CD4-positive, alpha-beta T cell (primary cell): ENCODE measurements at regions of chr12 and their contacts with region 1.

Region 1: GRCh38 chr12:96194971-96195844 is 1.0 kb downstream of the ELK3 start:
- DNase-seq: peak; percentile 47 to 95 (median 69)
- ATAC-seq: peak; percentile 72
- H3K4me3 ChIP-seq: peak overlapping the region; percentile 96
- H3K4me3 Mint-ChIP-seq: peak overlapping the region; percentile 96
- H3K27ac ChIP-seq: peak overlapping the region; percentile 85 to 98
- H3K27ac Mint-ChIP-seq: peak overlapping the region; percentile 97
- H3K4me1 ChIP-seq: peaks cover 33% of the 10 kb centered on the region
- H3K4me1 Mint-ChIP-seq: peaks cover 62% of the 10 kb centered on the region
- H3K27me3 ChIP-seq: no peaks in the 10 kb centered on the region
- H3K27me3 Mint-ChIP-seq: no peaks in the 10 kb centered on the region
- CTCF ChIP-seq: no peak

Region 2: DNA sequence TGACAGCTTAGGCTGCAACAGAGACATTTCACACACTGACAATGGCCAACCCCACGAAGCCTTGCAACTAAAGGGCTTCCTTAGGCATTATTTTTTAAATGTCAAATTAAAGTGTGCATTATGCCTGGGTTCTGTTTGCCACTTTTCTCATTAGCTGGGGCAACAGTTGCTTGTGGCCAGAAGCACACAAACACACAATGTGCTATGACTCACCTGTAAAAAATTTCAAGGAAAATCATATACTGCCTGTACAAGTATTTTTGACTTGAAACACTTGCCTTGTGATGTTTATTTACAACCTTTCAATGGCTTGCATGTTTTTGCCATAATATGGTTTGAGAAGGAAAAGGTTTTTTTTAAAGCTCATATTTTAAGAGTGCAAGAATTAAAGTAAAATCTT is 406.6 kb before region 1 on chr12:
- CTCF ChIA-PET with region 1: no interaction called
- POLR2A ChIA-PET with region 1: no interaction called
- intact Hi-C with region 1: no loop called
- DNase-seq: no peak
- ATAC-seq: no peak
- H3K4me3 ChIP-seq: no peak overlapping the region
- H3K4me3 Mint-ChIP-seq: peak overlapping the region; percentile 77
- H3K27ac ChIP-seq: no peak overlapping the region
- H3K27ac Mint-ChIP-seq: no peak overlapping the region
- H3K4me1 ChIP-seq: peaks cover 21% of the 10 kb centered on the region
- H3K4me1 Mint-ChIP-seq: peaks cover 8% of the 10 kb centered on the region
- H3K27me3 ChIP-seq: peaks cover 30 to 60% of the 10 kb centered on the region in 2 experiments
- H3K27me3 Mint-ChIP-seq: peaks cover 80% of the 10 kb centered on the region
- CTCF ChIP-seq: no peak

Region 3: GRCh38 chr12:96140174-96140573 is 55.0 kb before region 1 on chr12:
- CTCF ChIA-PET with region 1: no interaction called
- POLR2A ChIA-PET with region 1: no interaction called
- intact Hi-C with region 1: loop called in 1 of 2 experiments (anchors 5 kb)
- DNase-seq: no peak
- ATAC-seq: no peak
- H3K4me3 ChIP-seq: no peak overlapping the region
- H3K4me3 Mint-ChIP-seq: no peak overlapping the region
- H3K27ac ChIP-seq: no peak overlapping the region
- H3K27ac Mint-ChIP-seq: no peak overlapping the region
- H3K4me1 ChIP-seq: peaks cover 24% of the 10 kb centered on the region
- H3K4me1 Mint-ChIP-seq: peaks cover 29% of the 10 kb centered on the region
- H3K27me3 ChIP-seq: no peaks in the 10 kb centered on the region
- H3K27me3 Mint-ChIP-seq: no peaks in the 10 kb centered on the region
- CTCF ChIP-seq: no peak

Region 4: GRCh38 chr12:96208801-96209549 is 13.8 kb after region 1 on chr12:
- CTCF ChIA-PET with region 1: interaction called, 83 read pairs
- POLR2A ChIA-PET with region 1: interaction called, 42 read pairs
- intact Hi-C with region 1: loop called (anchors 2 kb)
- DNase-seq: peak in 2 of 14 experiments; percentile 23 to 30
- ATAC-seq: no peak
- H3K4me3 ChIP-seq: peak overlapping the region; percentile 3
- H3K4me3 Mint-ChIP-seq: peak overlapping the region; percentile 87
- H3K27ac ChIP-seq: peak overlapping the region in 1 of 2 donors; percentile 46
- H3K27ac Mint-ChIP-seq: peak overlapping the region; percentile 82
- H3K4me1 ChIP-seq: peaks cover 87% of the 10 kb centered on the region
- H3K4me1 Mint-ChIP-seq: peaks cover 97% of the 10 kb centered on the region
- H3K27me3 ChIP-seq: no peaks in the 10 kb centered on the region
- H3K27me3 Mint-ChIP-seq: no peaks in the 10 kb centered on the region
- CTCF ChIP-seq: no peak